ENCODE measurements at regions of chr4 and their contacts with region 1.

Region 1: GRCh38 chr4:3346146-3346545 is 53.3 kb downstream of the RGS12 start:
- DNase-seq: peak; percentile 75
- H3K4me3 ChIP-seq: no peak overlapping the region
- H3K27ac ChIP-seq: no peak overlapping the region
- H3K4me1 ChIP-seq: peaks cover 25% of the 10 kb centered on the region
- H3K27me3 ChIP-seq: no peaks in the 10 kb centered on the region
- CTCF ChIP-seq: peak; percentile 70 to 76
- POLR2A ChIP-seq: no peak

Region 2: GRCh38 chr4:3292571-3293400 is 53.4 kb before region 1 on chr4 and contains the start of gene RGS12:
- CTCF ChIA-PET with region 1: interaction called, 4 read pairs
- POLR2A ChIA-PET with region 1: no interaction called
- dilution Hi-C with region 1: no loop called
- intact Hi-C with region 1: loop called (anchors 1 kb)
- DNase-seq: peak; percentile 91
- H3K4me3 ChIP-seq: peak within 1 kb of the TSS; percentile 70 to 76 (median 75)
- H3K27ac ChIP-seq: peak within 1 kb of the TSS; percentile 78
- H3K4me1 ChIP-seq: peaks cover 18% of the 10 kb centered on the region
- H3K27me3 ChIP-seq: no peaks in the 10 kb centered on the region
- CTCF ChIP-seq: no peak
- POLR2A ChIP-seq: peak; percentile 70
- total RNA-seq, gene RGS12: 75.4 and 78.0 TPM in 2 replicates

Region 3: GRCh38 chr4:3330707-3331106 is 15.4 kb before region 1 on chr4:
- CTCF ChIA-PET with region 1: interaction called, 15 read pairs
- POLR2A ChIA-PET with region 1: interaction called, 4 read pairs
- dilution Hi-C with region 1: no loop called
- intact Hi-C with region 1: no loop called
- DNase-seq: peak; percentile 75
- H3K4me3 ChIP-seq: peak overlapping the region in 1 of 3 experiments; percentile 7
- H3K27ac ChIP-seq: peak overlapping the region; percentile 14
- H3K4me1 ChIP-seq: peaks cover 38% of the 10 kb centered on the region
- H3K27me3 ChIP-seq: no peaks in the 10 kb centered on the region
- CTCF ChIP-seq: no peak
- POLR2A ChIP-seq: no peak

Region 4: GRCh38 chr4:3375688-3376087 is 29.5 kb after region 1 on chr4:
- CTCF ChIA-PET with region 1: interaction called, 54 read pairs
- POLR2A ChIA-PET with region 1: no interaction called
- dilution Hi-C with region 1: no loop called
- intact Hi-C with region 1: loop called (anchors 2 kb)
- DNase-seq: peak; percentile 56
- H3K4me3 ChIP-seq: no peak overlapping the region
- H3K27ac ChIP-seq: no peak overlapping the region
- H3K4me1 ChIP-seq: peaks cover 21% of the 10 kb centered on the region
- H3K27me3 ChIP-seq: no peaks in the 10 kb centered on the region
- CTCF ChIP-seq: no peak
- POLR2A ChIP-seq: no peak

Region 5: GRCh38 chr4:3426465-3427133 is 80.5 kb after region 1 on chr4:
- CTCF ChIA-PET with region 1: interaction called, 22 read pairs
- POLR2A ChIA-PET with region 1: no interaction called
- dilution Hi-C with region 1: no loop called
- intact Hi-C with region 1: no loop called
- DNase-seq: no peak
- H3K4me3 ChIP-seq: no peak overlapping the region
- H3K27ac ChIP-seq: no peak overlapping the region
- H3K4me1 ChIP-seq: no peaks in the 10 kb centered on the region
- H3K27me3 ChIP-seq: no peaks in the 10 kb centered on the region
- CTCF ChIP-seq: no peak
- POLR2A ChIP-seq: no peak

Region 6: DNA sequence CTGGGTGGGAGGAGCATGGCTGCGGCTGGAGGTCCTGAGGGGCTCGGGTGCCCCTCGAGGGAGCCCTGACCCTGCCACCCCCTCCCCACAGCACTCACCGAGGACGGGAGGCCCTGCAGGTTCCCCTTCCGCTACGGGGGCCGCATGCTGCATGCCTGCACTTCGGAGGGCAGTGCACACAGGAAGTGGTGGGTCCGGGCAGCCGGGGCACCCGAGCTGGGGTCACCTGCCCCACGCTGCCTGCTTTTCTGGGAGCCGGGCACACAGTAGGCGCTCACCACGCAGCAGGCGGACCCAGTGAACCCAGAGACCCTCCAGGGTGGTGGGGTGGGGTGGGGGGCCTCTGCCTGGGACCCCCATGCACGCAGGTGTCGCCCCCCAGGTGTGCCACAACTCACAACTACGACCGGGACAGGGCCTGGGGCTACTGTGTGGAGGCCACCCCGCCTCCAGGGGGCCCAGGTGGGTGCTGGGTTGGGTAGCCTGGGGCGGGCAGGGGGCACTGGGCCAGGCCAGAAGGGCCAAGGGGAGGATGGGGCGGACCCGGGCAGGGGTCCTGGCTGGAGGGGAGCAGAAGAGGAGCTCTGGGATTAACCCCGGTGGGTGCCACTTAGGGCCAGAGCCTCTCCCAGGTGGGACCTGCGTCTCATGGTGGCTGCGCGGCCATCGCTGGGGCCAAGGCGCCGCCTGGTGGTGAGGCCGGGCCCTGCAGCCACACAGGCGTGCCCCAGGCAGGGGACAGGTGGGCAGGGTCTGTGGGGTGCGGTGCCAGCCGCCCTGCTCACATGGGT is 97.0 kb after region 1 on chr4:
- CTCF ChIA-PET with region 1: interaction called, 78 read pairs
- POLR2A ChIA-PET with region 1: interaction called, 3 read pairs
- dilution Hi-C with region 1: no loop called
- intact Hi-C with region 1: loop called (anchors 1 kb)
- DNase-seq: peak; percentile 27
- H3K4me3 ChIP-seq: no peak overlapping the region
- H3K27ac ChIP-seq: no peak overlapping the region
- H3K4me1 ChIP-seq: no peaks in the 10 kb centered on the region
- H3K27me3 ChIP-seq: no peaks in the 10 kb centered on the region
- CTCF ChIP-seq: peak; percentile 95 to 98
- POLR2A ChIP-seq: no peak

Region 7: GRCh38 chr4:3480528-3481112 is 134.5 kb after region 1 on chr4:
- CTCF ChIA-PET with region 1: interaction called, 32 read pairs
- POLR2A ChIA-PET with region 1: no interaction called
- dilution Hi-C with region 1: no loop called
- intact Hi-C with region 1: loop called (anchors 1 kb)
- DNase-seq: peak; percentile 78
- H3K4me3 ChIP-seq: no peak overlapping the region
- H3K27ac ChIP-seq: no peak overlapping the region
- H3K4me1 ChIP-seq: no peaks in the 10 kb centered on the region
- H3K27me3 ChIP-seq: peaks cover 2 to 14% of the 10 kb centered on the region in 2 experiments
- CTCF ChIP-seq: peak; percentile 98 to 100
- POLR2A ChIP-seq: no peak